ENCODE measurements at regions of chr18 and their contacts with region 1.

Region 1: DNA sequence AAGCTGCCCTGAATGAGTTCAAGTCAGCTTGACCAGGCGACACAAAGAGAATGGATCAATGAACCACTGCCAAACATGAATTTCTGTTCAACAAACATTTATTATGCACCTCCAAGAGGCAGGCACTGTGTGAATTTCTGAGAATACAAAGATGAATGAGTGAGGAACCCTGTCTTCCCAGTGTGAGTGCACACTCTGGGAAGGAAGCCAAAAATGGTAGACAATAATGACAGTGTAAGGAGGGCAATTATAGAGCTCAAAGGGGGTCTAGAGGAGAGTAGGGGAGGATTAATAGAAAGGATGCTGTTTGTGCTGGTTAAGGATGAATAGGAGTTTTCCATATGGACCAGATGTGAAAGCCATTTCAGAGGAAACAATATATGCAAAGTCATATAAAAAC is 213.4 kb downstream of the DCC start:
- DNase-seq: no peak
- ATAC-seq: no peak
- H3K4me3 ChIP-seq: no peak overlapping the region
- H3K27ac ChIP-seq: no peak overlapping the region
- H3K4me1 ChIP-seq: no peaks in the 10 kb centered on the region
- H3K27me3 ChIP-seq: no peaks in the 10 kb centered on the region
- CTCF ChIP-seq: no peak

Region 2: DNA sequence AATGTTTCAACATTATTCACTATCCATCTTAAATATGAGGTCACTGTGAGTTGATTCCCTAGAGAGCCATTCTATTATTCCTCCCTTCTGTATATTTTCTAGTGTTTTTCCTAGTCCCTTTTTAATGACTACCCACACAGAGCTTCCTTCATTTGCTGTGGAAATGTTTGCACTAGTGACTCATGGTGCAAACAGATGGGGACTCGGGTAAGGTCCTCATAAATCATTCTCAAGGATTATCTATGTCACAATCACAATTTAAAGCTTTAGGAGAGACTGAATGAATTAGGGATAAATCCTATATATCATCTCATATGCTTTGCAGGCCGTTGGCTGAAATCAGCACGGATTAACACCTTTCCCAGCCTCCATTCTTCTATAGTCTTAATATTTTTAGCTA is 53.8 kb before region 1 on chr18:
- intact Hi-C with region 1: loop called in 1 of 10 experiments (anchors 10 kb)
- DNase-seq: no peak
- ATAC-seq: no peak
- H3K4me3 ChIP-seq: no peak overlapping the region
- H3K27ac ChIP-seq: no peak overlapping the region
- H3K4me1 ChIP-seq: no peaks in the 10 kb centered on the region
- H3K27me3 ChIP-seq: no peaks in the 10 kb centered on the region
- CTCF ChIP-seq: no peak